ENCODE measurements at regions of chr5 and their contacts with region 1.

Region 1: DNA sequence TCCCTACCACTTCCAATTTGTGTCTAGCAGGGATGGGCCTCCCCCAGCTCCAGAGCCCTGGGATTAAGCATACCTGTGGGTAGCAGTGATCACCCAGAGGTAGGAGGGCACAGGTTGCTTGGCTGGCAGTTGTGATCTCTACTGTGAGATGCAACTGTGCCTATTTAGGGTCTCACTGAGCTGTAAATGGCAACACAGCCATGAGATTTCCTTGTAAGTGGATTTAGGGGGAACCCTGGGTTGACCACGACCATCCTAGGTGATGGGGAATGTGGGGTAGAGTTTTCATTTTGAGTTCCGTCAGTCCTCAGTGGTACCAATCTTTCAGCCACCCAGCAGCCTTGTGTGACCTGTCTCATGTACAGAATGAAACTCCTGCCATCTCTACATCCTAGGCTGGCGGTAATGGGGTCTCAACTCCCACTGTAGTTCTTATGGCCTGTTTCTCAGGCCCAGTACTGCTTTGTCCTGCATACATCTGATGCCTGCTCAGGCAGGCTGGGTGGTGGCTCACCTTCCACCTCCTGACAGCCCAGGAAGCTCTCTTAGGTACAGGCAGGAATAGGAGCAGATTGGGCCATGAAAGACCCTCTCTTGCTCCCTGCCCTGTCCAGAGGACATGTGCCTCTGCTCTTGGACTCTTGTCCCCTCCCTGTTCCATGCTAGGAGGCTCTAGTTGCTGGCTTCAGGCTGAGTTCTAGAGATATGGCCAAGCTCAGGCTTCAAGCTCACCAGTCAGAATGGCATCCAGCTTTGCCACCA is 8.1 kb downstream of the HNRNPAB start:
- DNase-seq: no peak
- ATAC-seq: no peak
- H3K4me3 ChIP-seq: no peak overlapping the region
- H3K4me3 Mint-ChIP-seq: no peak overlapping the region
- H3K27ac ChIP-seq: no peak overlapping the region
- H3K27ac Mint-ChIP-seq: peak overlapping the region; percentile 6
- H3K4me1 ChIP-seq: peaks cover 7 to 11% of the 10 kb centered on the region in 2 donors
- H3K4me1 Mint-ChIP-seq: peaks cover 15% of the 10 kb centered on the region
- H3K27me3 ChIP-seq: no peaks in the 10 kb centered on the region
- H3K27me3 Mint-ChIP-seq: no peaks in the 10 kb centered on the region
- CTCF ChIP-seq: no peak

Region 2: DNA sequence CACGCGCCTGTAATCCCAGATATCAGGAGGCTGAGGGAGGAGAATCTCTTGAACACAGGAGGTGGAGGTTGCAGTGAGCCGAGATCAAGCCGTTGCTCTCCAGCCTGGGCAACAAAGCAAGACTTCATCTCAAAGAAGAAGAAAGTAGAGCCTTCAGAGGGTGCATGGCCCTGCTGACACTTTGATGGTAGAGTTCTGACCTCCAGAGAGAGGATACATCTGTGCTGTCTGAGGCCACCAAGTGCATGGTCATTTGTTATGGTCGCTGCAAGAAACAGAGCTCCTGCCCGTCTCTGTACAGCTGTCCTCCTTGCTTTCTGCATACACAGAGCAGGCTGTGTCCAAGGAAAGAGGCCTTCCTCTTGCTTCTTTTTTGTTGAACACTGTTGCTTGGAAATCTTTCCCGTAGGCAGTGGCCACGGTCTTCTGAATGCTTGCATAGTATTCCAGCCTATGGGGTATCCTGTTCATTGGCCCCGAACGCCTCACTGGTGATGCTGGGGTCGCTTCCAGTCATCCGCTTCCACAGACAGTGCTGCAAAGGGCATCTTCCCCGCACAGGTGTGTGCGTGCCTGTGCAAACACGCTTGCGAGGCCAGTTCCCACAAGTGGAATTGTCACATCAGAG is 1438.9 kb before region 1 on chr5:
- CTCF ChIA-PET with region 1: no interaction called
- POLR2A ChIA-PET with region 1: no interaction called
- intact Hi-C with region 1: no loop called
- DNase-seq: no peak
- ATAC-seq: no peak
- H3K4me3 ChIP-seq: no peak overlapping the region
- H3K4me3 Mint-ChIP-seq: no peak overlapping the region
- H3K27ac ChIP-seq: no peak overlapping the region
- H3K27ac Mint-ChIP-seq: no peak overlapping the region
- H3K4me1 ChIP-seq: no peaks in the 10 kb centered on the region
- H3K4me1 Mint-ChIP-seq: no peaks in the 10 kb centered on the region
- H3K27me3 ChIP-seq: peaks cover 0 to 20% (median 3%) of the 10 kb centered on the region in 4 experiments
- H3K27me3 Mint-ChIP-seq: peaks cover 35% of the 10 kb centered on the region
- CTCF ChIP-seq: no peak

Region 3: DNA sequence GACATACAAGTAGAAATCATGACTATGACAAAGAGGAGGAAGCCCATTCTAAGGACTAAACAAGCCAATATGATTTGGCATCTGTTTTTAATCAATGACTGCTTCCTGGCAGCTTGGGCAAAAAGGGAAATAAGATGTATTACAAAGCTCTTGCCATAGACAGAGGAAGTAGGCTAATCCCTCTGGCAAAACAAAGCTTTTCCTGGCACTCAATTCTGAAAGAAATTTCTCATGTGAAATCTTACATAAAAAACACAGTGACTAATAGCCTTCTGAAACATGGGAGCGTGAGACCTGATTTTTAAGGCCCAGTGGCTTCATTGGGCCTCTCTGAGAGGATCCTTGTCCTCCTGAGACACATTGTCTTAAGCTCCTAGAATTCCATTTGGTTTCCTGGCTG is 284.2 kb after region 1 on chr5:
- CTCF ChIA-PET with region 1: no interaction called
- POLR2A ChIA-PET with region 1: no interaction called
- intact Hi-C with region 1: no loop called
- DNase-seq: no peak
- ATAC-seq: no peak
- H3K4me3 ChIP-seq: no peak overlapping the region
- H3K4me3 Mint-ChIP-seq: no peak overlapping the region
- H3K27ac ChIP-seq: no peak overlapping the region
- H3K27ac Mint-ChIP-seq: no peak overlapping the region
- H3K4me1 ChIP-seq: no peaks in the 10 kb centered on the region
- H3K4me1 Mint-ChIP-seq: no peaks in the 10 kb centered on the region
- H3K27me3 ChIP-seq: peaks cover 0 to 8% (median 0%) of the 10 kb centered on the region in 4 experiments
- H3K27me3 Mint-ChIP-seq: peaks cover 15% of the 10 kb centered on the region
- CTCF ChIP-seq: no peak

Region 4: GRCh38 chr5:178563621-178564020 is 351.2 kb after region 1 on chr5:
- CTCF ChIA-PET with region 1: no interaction called
- POLR2A ChIA-PET with region 1: interaction called, 13 read pairs
- intact Hi-C with region 1: no loop called
- DNase-seq: no peak
- ATAC-seq: no peak
- H3K4me3 ChIP-seq: no peak overlapping the region
- H3K4me3 Mint-ChIP-seq: no peak overlapping the region
- H3K27ac ChIP-seq: no peak overlapping the region
- H3K27ac Mint-ChIP-seq: no peak overlapping the region
- H3K4me1 ChIP-seq: peaks cover 0 to 5% of the 10 kb centered on the region in 2 donors
- H3K4me1 Mint-ChIP-seq: peaks cover 9% of the 10 kb centered on the region
- H3K27me3 ChIP-seq: peaks cover 0 to 8% (median 6%) of the 10 kb centered on the region in 4 experiments
- H3K27me3 Mint-ChIP-seq: peaks cover 45% of the 10 kb centered on the region
- CTCF ChIP-seq: no peak

Measured in B cell (primary cell).